ENCODE measurements at regions of chr1 and their contacts with region 1.

Region 1: GRCh38 chr1:99849744-99850458 is at the start of gene AGL:
- DNase-seq: peak; percentile 39 to 89
- H3K4me3 ChIP-seq: peak within 1 kb of the TSS; percentile 84 to 86
- H3K27ac ChIP-seq: peak within 1 kb of the TSS; percentile 89
- H3K4me1 ChIP-seq: peaks cover 4 to 6% of the 10 kb centered on the region in 2 donors
- H3K27me3 ChIP-seq: no peaks in the 10 kb centered on the region
- CTCF ChIP-seq: no peak
- total RNA-seq, gene AGL: 9.9 TPM

Region 2: GRCh38 chr1:99808391-99809115 is 41.3 kb before region 1 on chr1:
- intact Hi-C with region 1: loop called (anchors 2 kb)
- DNase-seq: peak in 1 of 2 donors; percentile 62
- H3K4me3 ChIP-seq: peak overlapping the region in 1 of 2 donors; percentile 52
- H3K27ac ChIP-seq: no peak overlapping the region
- H3K4me1 ChIP-seq: peaks cover 0 to 3% of the 10 kb centered on the region in 2 donors
- H3K27me3 ChIP-seq: no peaks in the 10 kb centered on the region
- CTCF ChIP-seq: peak; percentile 54 to 64 (median 63)

Region 3: DNA sequence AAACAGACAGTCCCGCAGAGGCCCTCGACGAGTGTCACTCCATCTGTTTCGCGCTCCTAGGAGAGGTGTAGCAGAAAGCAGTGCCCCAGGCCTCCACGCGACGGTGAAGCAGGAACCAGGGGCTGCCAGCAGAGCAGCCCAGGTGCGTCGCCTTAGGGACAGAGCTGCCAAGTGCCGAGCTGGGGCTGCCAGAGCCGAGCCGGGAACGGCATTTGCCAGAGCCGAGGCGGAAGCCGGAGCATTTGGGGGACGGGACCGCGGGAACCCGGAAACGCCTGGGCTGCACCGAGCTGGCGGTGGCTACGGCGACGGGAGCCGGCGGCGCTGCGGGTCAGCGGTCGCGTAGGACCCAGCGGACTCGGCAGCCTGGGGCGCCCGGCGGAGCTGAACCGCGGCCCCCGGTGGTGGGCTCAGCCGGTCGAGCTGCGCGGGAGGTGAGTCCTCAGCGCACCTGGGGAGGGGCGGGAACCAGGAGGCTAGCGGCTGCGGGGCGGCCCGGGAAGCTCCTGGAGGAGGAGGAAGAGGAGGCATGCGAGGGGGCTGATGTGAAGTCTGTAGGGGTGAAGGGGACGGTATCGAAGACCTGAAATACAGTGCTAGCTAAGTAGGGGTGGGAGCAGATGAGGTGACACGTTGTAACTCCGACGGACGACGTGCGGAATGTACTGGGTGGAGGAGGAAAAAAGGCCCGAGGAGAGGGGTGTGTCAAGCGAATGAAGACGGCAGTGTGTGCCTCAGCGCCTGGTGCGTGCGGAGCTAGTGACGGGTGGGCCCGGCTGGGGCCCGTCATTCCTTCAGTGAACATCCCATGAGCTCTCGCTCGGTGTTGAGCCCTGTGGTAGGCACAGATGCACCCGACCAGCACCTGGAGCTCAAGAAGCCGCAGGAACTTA is 120.1 kb after region 1 on chr1 and contains the start of gene SLC35A3:
- intact Hi-C with region 1: loop called (anchors 5 kb)
- DNase-seq: peak; percentile 9 to 85
- H3K4me3 ChIP-seq: peak within 1 kb of the TSS; percentile 82 to 85
- H3K27ac ChIP-seq: peak within 1 kb of the TSS; percentile 66 to 76
- H3K4me1 ChIP-seq: peaks cover 2 to 4% of the 10 kb centered on the region in 2 donors
- H3K27me3 ChIP-seq: no peaks in the 10 kb centered on the region
- CTCF ChIP-seq: no peak
- total RNA-seq, gene SLC35A3: 8.4 TPM

Region 4: GRCh38 chr1:100037927-100038659 is 188.2 kb after region 1 on chr1:
- intact Hi-C with region 1: loop called (anchors 5 kb)
- DNase-seq: peak; percentile 59 to 95
- H3K4me3 ChIP-seq: peak overlapping the region; percentile 93 to 94
- H3K27ac ChIP-seq: peak overlapping the region; percentile 97 to 98
- H3K4me1 ChIP-seq: peaks cover 4 to 9% of the 10 kb centered on the region in 2 donors
- H3K27me3 ChIP-seq: no peaks in the 10 kb centered on the region
- CTCF ChIP-seq: no peak

Region 5: GRCh38 chr1:100249537-100250257 is 399.8 kb after region 1 on chr1 and contains the start of gene DBT:
- intact Hi-C with region 1: loop called (anchors 5 kb)
- DNase-seq: peak; percentile 86 to 98
- H3K4me3 ChIP-seq: peak within 1 kb of the TSS; percentile 57 to 85
- H3K27ac ChIP-seq: peak within 1 kb of the TSS; percentile 85 to 86
- H3K4me1 ChIP-seq: no peaks in the 10 kb centered on the region
- H3K27me3 ChIP-seq: no peaks in the 10 kb centered on the region
- CTCF ChIP-seq: no peak
- total RNA-seq, gene DBT: 2.3 TPM

Region 6: DNA sequence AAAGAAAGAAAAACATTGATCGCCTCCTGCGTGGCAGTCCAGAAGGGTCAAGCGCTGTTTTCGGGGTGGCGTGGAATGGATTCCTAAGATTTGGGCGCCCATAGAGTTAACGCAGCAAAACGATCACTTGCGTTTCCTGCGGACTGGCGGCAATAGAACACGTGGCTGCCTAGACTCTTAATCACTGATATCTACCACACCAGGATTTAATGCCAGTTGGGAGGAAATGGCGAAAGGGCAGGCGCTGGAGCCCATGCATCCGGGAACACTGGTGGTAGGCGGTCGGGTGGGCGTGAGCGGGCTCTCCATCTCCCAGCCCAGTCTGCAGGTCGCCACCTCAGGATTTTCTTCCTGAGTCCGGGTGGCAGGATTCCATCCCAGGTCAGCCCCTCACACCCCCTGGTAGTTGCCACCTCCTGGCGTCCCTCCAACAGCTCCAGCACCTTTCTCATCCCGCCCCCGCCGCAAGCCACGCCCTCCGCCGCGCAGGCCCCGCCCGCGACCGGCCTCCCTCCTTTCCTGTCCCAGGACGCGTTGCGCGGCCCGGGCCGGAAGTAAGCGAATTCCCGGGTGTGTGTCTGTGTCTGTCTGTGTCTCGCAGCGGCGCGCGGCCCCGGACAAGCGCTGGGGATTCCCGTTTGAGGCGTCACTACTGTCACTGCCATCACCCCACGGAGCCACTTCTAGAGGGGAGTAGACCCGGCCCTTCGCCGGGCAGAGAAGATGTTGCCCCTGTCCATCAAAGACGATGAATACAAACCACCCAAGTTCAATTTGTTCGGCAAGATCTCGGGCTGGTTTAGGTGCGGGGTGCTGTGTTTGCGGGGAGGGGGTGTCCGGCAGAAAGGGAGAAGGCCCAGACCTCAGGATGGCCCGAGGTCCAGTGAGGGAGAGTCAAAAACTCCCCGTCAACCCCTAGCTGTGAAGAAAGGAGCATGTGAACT is 1045.9 kb after region 1 on chr1 and contains the start of gene SLC30A7:
- intact Hi-C with region 1: loop called (anchors 10 kb)
- DNase-seq: peak; percentile 84 to 97
- H3K4me3 ChIP-seq: peak within 1 kb of the TSS; percentile 77 to 79
- H3K27ac ChIP-seq: peak within 1 kb of the TSS; percentile 96 to 97
- H3K4me1 ChIP-seq: peaks cover 0 to 13% of the 10 kb centered on the region in 2 donors
- H3K27me3 ChIP-seq: no peaks in the 10 kb centered on the region
- CTCF ChIP-seq: no peak
- total RNA-seq, gene SLC30A7: 12.1 TPM

Measured in ascending aorta (tissue), 2 donors.